ENCODE measurements at regions of chr18 and their contacts with region 1.

Region 1: GRCh38 chr18:62714671-62715435 is 488 bp upstream of the PHLPP1 start:
- DNase-seq: peak; percentile 85
- H3K4me3 Mint-ChIP-seq: peak overlapping the region; percentile 87
- H3K27ac Mint-ChIP-seq: peak overlapping the region; percentile 85
- H3K4me1 Mint-ChIP-seq: peaks cover 35% of the 10 kb centered on the region
- H3K27me3 Mint-ChIP-seq: peaks cover 21% of the 10 kb centered on the region

Region 2: DNA sequence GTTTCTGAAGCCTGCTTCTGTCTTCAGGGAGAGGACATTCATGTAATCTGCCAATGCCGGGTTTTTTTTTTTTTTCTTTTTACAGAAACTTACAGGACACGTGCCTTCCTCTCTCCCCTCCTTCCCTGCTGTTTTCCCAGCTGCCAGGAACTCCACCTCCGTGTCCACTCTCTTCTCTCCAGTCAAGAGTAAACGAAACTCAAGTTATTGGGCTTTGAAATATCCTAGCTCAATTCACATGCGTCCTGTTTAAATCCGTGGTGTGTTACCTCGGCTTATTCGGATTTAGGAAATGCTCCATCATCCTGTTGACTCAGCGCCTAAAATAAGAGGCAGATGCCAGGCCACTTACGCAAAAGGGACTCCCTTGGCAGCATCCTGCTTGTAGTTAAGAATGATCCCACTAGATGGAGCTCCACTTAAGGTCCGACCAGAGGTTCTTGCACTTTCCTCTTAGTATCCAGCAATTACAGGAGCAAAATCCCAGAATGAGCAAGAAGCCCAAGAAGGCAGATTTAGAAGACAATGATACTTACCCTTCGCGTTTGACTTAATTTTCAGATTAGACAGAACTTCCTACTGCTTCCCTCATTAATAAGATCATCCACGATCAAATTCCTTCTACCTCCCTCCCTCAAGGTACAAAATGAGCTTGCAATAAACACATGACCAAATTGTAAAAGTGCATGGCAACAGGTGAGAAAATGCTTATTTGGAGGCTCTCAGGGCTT is 289.2 kb before region 1 on chr18:
- intact Hi-C with region 1: loop called (anchors 2 kb)
- DNase-seq: peak; percentile 56
- H3K4me3 Mint-ChIP-seq: peak overlapping the region; percentile 19
- H3K27ac Mint-ChIP-seq: peak overlapping the region; percentile 69
- H3K4me1 Mint-ChIP-seq: peaks cover 44% of the 10 kb centered on the region
- H3K27me3 Mint-ChIP-seq: no peaks in the 10 kb centered on the region

Region 3: DNA sequence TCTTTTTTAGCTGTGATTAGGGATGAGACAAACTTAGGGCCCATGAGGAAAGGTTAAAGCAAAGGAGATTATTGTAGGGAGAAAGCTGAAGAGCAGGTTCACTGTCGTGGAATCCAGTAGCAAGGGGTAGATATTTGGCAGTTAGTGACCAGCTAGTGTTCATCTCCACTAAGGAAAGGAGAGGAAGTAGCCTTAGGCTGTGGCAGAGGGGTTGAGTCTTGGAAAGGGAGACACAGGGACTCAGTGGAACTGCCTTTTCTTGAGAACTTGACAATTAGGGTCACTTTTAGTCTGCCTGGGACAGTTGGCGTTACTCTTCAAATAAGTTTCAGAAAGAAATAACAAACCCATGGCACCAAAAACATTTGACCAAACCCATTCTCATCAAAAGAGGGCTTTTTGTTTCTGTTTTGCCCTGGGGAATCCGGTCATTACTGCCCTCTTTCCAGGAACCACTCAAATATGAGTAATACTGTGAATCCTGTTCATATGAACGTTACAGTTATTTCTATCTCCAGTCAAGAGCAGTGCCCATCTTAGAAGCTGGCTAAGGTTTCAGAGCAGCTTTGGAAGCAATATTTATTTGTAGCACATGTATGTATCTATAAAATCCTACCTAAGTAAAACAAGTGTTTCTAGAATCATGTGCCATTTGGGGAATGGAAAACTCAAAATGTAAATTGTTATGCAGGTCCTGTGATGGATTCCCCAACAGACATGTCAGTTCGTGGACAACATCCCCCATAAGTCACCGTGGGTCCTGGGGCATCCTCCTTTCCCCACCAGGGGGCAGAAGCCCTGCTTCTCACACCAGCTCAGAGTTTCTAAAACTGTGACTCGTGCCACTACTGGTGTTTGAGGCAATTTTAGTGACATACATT is 76.8 kb before region 1 on chr18:
- intact Hi-C with region 1: loop called (anchors 2 kb)
- DNase-seq: peak; percentile 36
- H3K4me3 Mint-ChIP-seq: no peak overlapping the region
- H3K27ac Mint-ChIP-seq: no peak overlapping the region
- H3K4me1 Mint-ChIP-seq: peaks cover 17% of the 10 kb centered on the region
- H3K27me3 Mint-ChIP-seq: peaks cover 6% of the 10 kb centered on the region

Region 4: GRCh38 chr18:62729487-62730386 is 14.9 kb after region 1 on chr18:
- intact Hi-C with region 1: no loop called
- DNase-seq: no peak
- H3K4me3 Mint-ChIP-seq: no peak overlapping the region
- H3K27ac Mint-ChIP-seq: no peak overlapping the region
- H3K4me1 Mint-ChIP-seq: no peaks in the 10 kb centered on the region
- H3K27me3 Mint-ChIP-seq: peaks cover 2% of the 10 kb centered on the region

Region 5: DNA sequence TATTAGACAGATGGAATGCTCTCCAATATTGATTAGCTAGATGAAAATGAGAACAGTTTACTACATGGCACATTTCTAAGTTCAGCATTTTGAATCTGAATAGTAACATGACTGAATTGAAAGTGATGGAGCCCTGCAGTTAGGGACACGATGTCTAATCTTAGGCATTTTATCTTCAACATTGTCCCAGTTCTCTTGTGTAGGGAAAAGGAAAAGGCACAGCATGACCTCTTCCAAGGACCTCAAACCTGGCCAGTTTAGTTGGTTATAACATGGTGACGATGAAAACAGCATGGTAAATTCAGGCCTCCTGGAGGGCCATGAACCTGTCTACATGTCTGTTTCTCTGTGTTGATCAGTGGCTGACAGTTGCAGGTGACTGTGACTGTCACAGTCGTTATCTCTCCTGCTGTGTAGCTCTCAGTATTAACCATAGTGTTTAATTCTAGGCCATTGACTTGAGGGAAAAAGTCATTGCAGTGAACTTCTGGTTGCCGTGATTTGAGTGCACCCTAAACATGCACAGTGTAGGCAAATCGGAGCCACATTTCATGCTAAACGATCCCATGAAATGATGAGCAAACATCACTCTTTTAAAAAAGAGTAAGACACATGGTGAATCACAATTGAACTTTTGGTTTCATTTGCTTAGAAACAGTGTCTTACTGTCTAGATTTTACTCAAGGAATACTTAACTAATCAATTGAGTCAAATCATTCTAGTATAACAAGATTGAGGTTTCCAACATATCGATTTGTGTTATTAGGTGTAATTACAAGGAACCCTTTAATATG is 130.2 kb after region 1 on chr18:
- intact Hi-C with region 1: loop called (anchors 1 kb)
- DNase-seq: no peak
- H3K4me3 Mint-ChIP-seq: peak overlapping the region; percentile 70
- H3K27ac Mint-ChIP-seq: peak overlapping the region; percentile 82
- H3K4me1 Mint-ChIP-seq: peaks cover 51% of the 10 kb centered on the region
- H3K27me3 Mint-ChIP-seq: no peaks in the 10 kb centered on the region

Region 6: GRCh38 chr18:63155169-63155852 is 440.5 kb after region 1 on chr18:
- intact Hi-C with region 1: loop called (anchors 5 kb)
- DNase-seq: peak; percentile 72
- H3K4me3 Mint-ChIP-seq: peak overlapping the region; percentile 79
- H3K27ac Mint-ChIP-seq: peak overlapping the region; percentile 88
- H3K4me1 Mint-ChIP-seq: peaks cover 99% of the 10 kb centered on the region
- H3K27me3 Mint-ChIP-seq: no peaks in the 10 kb centered on the region

Region 7: GRCh38 chr18:63422087-63422809 is 707.4 kb after region 1 on chr18 and contains the start of gene VPS4B:
- intact Hi-C with region 1: loop called (anchors 1 kb)
- DNase-seq: peak; percentile 100
- H3K4me3 Mint-ChIP-seq: peak within 1 kb of the TSS; percentile 91
- H3K27ac Mint-ChIP-seq: peak within 1 kb of the TSS; percentile 92
- H3K4me1 Mint-ChIP-seq: peaks cover 18% of the 10 kb centered on the region
- H3K27me3 Mint-ChIP-seq: no peaks in the 10 kb centered on the region
- total RNA-seq, gene VPS4B: 58.6 and 60.7 TPM in 2 replicates